Sciatic nerve (tissue), 2 donors: ENCODE measurements at regions of chr19 and their contacts with region 1.

Region 1: DNA sequence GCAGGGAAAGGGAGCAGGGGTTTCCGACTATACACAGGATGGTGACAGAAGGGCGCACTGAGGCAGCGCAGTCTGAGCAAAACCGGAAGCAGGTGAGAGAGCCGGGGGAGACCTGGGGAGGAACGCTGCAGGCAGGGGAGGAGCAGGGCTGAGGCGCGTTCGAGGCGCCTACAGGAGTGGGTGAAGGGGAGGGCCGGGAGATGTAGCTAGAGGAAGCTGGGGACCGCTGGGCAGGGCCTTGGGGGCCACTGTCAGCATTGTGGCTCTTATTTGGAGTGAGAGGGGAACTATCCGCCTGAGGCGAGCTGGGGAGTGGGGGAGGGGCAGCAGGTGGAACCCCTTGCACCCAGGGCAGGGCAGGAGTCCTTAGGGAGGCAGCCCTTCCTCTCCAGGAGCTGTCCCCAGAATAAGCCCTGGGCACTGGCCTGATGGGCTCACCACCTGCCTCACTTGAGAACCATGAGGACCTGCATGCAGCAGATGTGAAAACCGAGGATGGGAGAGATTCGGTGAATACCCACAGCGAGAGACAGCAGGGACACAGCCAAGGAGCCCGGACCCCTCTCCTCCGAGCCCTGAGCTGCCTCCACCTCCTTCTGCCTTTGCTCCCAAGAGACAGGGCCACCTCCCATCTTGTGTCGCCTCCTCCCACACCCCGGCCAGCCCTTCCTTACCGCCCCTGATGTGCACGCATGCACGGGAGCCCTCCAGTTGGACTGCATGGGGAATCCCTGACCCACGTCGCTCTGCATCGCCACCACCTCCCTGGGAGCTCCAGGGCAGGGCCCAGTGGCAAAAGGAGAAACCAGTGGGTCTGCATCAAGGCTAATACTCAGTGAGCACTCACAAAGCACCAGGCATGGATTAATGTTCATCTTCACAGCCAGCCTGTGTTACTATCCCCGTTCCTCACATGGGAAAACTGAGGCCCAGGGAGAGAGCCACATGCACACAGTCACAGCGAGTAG is 10.3 kb downstream of the AKT2 start:
- DNase-seq: no peak
- ATAC-seq: no peak

Region 2: DNA sequence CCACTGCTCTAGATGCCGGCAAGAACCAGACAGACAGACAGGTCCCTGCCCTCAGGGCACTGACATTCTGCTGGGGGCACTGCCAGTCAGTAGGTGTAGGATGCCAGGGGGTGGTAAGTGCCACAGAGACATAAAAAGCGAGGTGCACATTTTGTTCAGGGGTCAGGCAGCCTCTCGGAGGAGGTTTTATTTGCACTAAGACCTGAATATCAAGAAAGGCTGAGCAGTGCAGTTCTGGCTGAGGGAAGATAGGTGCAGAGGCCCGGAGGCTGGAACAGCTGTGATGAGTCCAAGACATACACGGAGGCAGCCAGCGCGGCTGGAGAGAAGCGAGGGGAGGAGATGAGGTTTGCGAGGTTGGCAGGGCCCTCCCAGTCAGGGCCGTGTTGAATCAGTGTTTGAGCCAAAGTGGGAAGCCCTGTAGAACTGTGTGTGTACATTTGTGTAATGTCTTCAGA is 1114.5 kb before region 1 on chr19:
- intact Hi-C with region 1: loop called (anchors 5 kb)
- DNase-seq: peak; percentile 81
- ATAC-seq: peak; percentile 91

Region 3: GRCh38 chr19:40322871-40323615 is 48.2 kb after region 1 on chr19:
- intact Hi-C with region 1: no loop called
- DNase-seq: no peak
- ATAC-seq: no peak